ENCODE measurements at regions of chr3 and their contacts with region 1.

Region 1: DNA sequence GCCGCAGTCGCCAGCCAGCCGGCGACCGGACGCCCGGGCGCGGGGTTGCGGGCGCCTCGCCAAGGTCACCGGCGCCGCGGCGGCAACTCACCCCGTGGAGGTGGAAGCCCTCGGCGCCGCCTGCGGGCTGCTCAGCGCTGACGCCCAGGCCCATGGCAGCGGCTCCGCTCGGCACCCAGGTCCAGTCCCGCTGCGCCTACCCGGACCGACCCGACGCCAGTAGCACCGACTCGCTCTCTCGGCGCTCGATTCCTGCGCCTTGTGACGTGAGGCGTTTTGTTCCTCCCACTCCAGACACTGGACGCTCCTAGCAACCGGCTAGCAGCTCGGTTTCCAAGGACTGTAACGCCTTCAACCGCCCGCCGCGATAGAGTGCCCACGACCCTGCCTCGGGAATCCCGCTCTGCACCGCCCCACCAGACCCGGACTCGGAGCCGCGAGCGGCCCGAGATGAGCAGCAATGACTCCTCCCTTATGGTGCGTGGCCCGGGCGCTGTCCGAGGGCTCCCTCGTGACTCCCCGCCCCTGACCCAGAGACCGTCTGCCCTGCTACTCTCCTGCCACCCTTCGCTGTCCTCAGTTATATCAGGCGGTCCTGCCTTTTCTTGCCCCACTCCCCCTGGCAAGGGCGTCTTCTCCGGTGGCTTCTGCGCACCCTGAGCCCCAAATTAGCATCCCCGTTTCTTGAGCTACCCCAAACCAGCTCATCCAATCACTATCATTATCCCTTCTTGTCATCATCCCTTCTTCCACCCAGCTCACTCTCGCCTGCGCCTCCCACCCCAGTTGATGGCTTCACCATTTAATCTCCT is at the starts of genes GORASP1 and TTC21A:
- DNase-seq: no peak
- ATAC-seq: peak; percentile 75
- H3K4me3 ChIP-seq: peak within 1 kb of the TSS; percentile 91
- H3K27ac ChIP-seq: peak within 1 kb of the TSS; percentile 59
- H3K4me1 ChIP-seq: peaks cover 27% of the 10 kb centered on the region
- H3K27me3 ChIP-seq: no peaks in the 10 kb centered on the region
- CTCF ChIP-seq: no peak
- EP300 ChIP-seq: no peak
- POLR2A ChIP-seq: peak; percentile 60
- RAD21 ChIP-seq: no peak
- polyA plus RNA-seq, gene GORASP1: 3.6 to 5.0 TPM
- polyA plus RNA-seq, gene TTC21A: 0.62 to 0.68 TPM

Region 2: DNA sequence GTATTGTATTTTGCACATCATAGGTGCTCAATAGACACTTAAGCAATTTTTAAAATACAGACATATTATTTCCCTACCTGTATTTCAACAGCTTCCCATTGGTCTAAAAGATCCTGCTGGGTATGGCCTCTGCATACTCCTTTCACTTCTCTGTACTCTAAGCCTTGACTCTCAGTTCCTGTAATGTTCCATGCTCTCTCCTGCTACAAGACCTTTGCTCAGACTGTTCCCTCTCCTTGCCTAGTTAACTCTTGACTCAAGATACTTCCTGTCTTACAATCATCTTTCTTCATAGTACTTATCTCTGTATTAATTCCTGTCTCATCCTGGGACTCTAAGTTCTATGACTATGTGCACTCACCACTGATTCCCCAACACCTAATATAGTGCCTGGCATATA is 57.6 kb before region 1 on chr3:
- CTCF ChIA-PET with region 1: no interaction called
- POLR2A ChIA-PET with region 1: no interaction called
- RAD21 ChIA-PET with region 1: no interaction called
- SMC1A ChIA-PET with region 1: no interaction called
- in situ Hi-C with region 1: no loop called
- intact Hi-C with region 1: no loop called
- DNase-seq: no peak
- ATAC-seq: no peak
- H3K4me3 ChIP-seq: no peak overlapping the region
- H3K27ac ChIP-seq: no peak overlapping the region
- H3K4me1 ChIP-seq: no peaks in the 10 kb centered on the region; the same call in 1 of the 2 replicates
- H3K27me3 ChIP-seq: no peaks in the 10 kb centered on the region
- CTCF ChIP-seq: no peak
- EP300 ChIP-seq: no peak
- POLR2A ChIP-seq: no peak
- RAD21 ChIP-seq: no peak

Region 3: DNA sequence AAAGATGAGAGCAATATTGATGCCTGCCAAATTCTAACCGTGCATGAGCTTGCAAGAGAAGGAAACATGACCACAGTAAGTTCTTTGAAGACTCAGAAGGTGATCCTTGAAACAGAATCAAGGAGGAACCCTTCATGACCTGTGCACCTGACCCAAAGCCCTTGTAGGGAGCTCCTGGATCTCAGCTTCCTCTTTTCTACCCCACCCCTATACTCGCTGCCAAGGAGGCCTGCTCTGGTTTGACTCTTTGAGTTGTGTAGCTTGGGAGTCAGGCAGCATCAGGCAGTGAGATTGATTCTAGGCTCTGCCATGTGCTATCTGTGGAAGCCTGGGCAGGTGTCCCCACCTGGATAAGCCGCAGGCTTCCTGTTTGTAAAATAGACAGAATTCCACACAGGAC is 10.5 kb after region 1 on chr3:
- CTCF ChIA-PET with region 1: interaction called, 3 read pairs
- POLR2A ChIA-PET with region 1: no interaction called
- RAD21 ChIA-PET with region 1: no interaction called
- SMC1A ChIA-PET with region 1: interaction called, 11 read pairs
- in situ Hi-C with region 1: no loop called
- intact Hi-C with region 1: no loop called
- DNase-seq: no peak
- ATAC-seq: peak; percentile 61
- H3K4me3 ChIP-seq: no peak overlapping the region
- H3K27ac ChIP-seq: no peak overlapping the region
- H3K4me1 ChIP-seq: peaks cover 16% of the 10 kb centered on the region
- H3K27me3 ChIP-seq: no peaks in the 10 kb centered on the region
- CTCF ChIP-seq: no peak
- EP300 ChIP-seq: no peak
- POLR2A ChIP-seq: no peak
- RAD21 ChIP-seq: no peak

Region 4: GRCh38 chr3:39126532-39127071 is 19.0 kb after region 1 on chr3:
- CTCF ChIA-PET with region 1: interaction called, 11 read pairs
- POLR2A ChIA-PET with region 1: interaction called, 4 read pairs
- RAD21 ChIA-PET with region 1: interaction called, 3 read pairs
- SMC1A ChIA-PET with region 1: interaction called, 6 read pairs
- in situ Hi-C with region 1: no loop called
- intact Hi-C with region 1: no loop called
- DNase-seq: no peak
- ATAC-seq: peak; percentile 67
- H3K4me3 ChIP-seq: no peak overlapping the region
- H3K27ac ChIP-seq: no peak overlapping the region
- H3K4me1 ChIP-seq: peaks cover 25% of the 10 kb centered on the region
- H3K27me3 ChIP-seq: no peaks in the 10 kb centered on the region
- CTCF ChIP-seq: peak; percentile 37 to 46 (median 44); a peak in 5 of 6 replicates
- EP300 ChIP-seq: no peak
- POLR2A ChIP-seq: no peak
- RAD21 ChIP-seq: peak; percentile 73

Region 5: GRCh38 chr3:39146984-39147591 is 39.5 kb after region 1 on chr3:
- CTCF ChIA-PET with region 1: interaction called, 10 read pairs
- POLR2A ChIA-PET with region 1: interaction called, 11 read pairs
- RAD21 ChIA-PET with region 1: interaction called, 14 read pairs
- SMC1A ChIA-PET with region 1: interaction called, 11 read pairs
- in situ Hi-C with region 1: no loop called
- intact Hi-C with region 1: loop called (anchors 1 kb)
- DNase-seq: no peak
- ATAC-seq: peak; percentile 38
- H3K4me3 ChIP-seq: peak overlapping the region; percentile 85
- H3K27ac ChIP-seq: peak overlapping the region; percentile 99
- H3K4me1 ChIP-seq: peaks cover 45% of the 10 kb centered on the region
- H3K27me3 ChIP-seq: no peaks in the 10 kb centered on the region
- CTCF ChIP-seq: no peak
- EP300 ChIP-seq: no peak
- POLR2A ChIP-seq: peak; percentile 57
- RAD21 ChIP-seq: no peak

Region 6: DNA sequence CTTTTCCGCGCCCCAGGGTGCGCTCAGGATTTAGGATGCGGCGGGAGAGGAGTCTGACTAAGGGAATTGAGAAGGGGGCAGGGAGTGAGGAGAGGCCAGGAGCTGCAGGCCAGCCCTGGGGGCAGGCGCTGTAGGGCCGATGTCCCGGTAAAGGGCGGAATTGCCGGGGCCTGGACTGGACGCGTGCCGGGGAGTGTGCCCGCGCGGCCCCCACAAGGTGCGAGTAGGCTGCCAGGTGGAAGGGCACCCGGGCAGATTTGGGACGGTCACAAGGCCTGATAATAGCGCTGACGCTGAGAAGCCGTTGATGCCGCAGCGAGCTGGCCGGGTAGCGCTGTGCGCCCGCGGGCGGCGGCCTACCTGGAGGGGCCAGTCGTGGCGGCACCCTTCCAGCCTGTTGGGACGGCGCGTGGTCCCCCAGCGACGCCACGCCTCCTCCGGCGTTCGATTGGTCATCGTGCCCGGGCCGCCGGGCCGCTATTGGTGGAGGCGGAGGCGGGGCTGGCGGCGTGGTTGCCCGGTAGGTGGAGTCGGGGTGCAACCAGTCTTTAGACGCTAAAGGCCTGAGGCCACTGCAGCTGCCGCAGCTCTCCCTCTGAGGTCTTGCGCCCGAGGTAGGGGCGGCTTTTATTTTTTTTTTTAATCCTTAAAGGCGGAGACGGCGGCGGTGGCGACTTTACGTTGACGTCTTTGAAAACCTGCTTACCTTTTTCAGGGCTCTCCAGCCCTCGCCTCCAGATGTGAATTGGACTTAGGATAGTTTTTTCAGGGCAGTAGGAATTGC is 276.5 kb after region 1 on chr3:
- CTCF ChIA-PET with region 1: no interaction called
- POLR2A ChIA-PET with region 1: no interaction called
- RAD21 ChIA-PET with region 1: no interaction called
- SMC1A ChIA-PET with region 1: no interaction called
- in situ Hi-C with region 1: no loop called
- intact Hi-C with region 1: no loop called
- DNase-seq: peak; percentile 70
- ATAC-seq: peak; percentile 89
- H3K4me3 ChIP-seq: peak overlapping the region; percentile 89
- H3K27ac ChIP-seq: peak overlapping the region; percentile 84
- H3K4me1 ChIP-seq: peaks cover 10% of the 10 kb centered on the region
- H3K27me3 ChIP-seq: no peaks in the 10 kb centered on the region
- CTCF ChIP-seq: 0 out of 6 replicates have a peak, but pooled peaks of 1 of the 3 experiments have one; percentile 0
- EP300 ChIP-seq: no peak
- POLR2A ChIP-seq: peak; percentile 81
- RAD21 ChIP-seq: no peak